ENCODE measurements at regions of chr2 and their contacts with region 1.

Region 1: GRCh38 chr2:36137612-36138011 is 218.0 kb upstream of the CRIM1 start:
- DNase-seq: no peak
- H3K4me3 ChIP-seq: no peak overlapping the region
- H3K27ac ChIP-seq: no peak overlapping the region
- H3K4me1 ChIP-seq: no peaks in the 10 kb centered on the region
- H3K27me3 ChIP-seq: no peaks in the 10 kb centered on the region
- CTCF ChIP-seq: no peak
- POLR2A ChIP-seq: no peak

Region 2: DNA sequence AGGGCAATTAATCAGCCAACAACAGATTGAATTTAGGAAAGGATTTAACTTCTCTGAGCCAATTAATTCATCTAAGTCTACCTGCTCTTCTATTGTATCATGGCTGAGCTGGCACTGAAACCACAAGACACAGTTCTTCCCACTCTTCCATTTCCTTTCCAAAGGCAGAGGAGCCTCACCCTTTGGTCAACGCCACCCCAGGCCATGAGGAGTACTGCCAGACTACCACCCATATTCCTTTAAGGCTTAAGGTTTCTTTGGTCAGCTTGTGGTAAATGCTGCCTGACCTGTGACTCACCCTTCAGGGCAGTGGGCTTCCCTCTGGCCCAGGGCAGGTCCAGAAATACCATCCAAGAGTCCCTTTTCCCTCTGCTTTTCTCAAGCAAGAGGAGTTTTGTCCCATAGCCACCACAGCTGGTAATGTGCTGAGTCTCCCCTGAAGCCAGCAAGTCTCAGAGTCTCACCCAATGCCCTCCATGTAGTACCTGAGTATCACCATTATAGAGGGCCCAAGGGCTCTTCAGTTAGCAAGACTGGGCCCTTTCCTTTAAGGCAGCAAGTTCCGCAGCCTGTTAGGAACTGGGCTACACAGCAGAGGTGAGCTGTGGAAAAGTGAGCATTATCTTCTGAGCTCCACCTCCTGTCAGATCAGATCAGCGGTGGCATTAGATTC is 682.5 kb before region 1 on chr2:
- intact Hi-C with region 1: loop called (anchors 10 kb)
- DNase-seq: no peak
- H3K4me3 ChIP-seq: no peak overlapping the region
- H3K27ac ChIP-seq: no peak overlapping the region
- H3K4me1 ChIP-seq: no peaks in the 10 kb centered on the region
- H3K27me3 ChIP-seq: no peaks in the 10 kb centered on the region
- CTCF ChIP-seq: no peak
- POLR2A ChIP-seq: no peak

Region 3: GRCh38 chr2:36088716-36089328 is 48.8 kb before region 1 on chr2:
- intact Hi-C with region 1: no loop called
- DNase-seq: no peak
- H3K4me3 ChIP-seq: no peak overlapping the region
- H3K27ac ChIP-seq: no peak overlapping the region
- H3K4me1 ChIP-seq: no peaks in the 10 kb centered on the region
- H3K27me3 ChIP-seq: no peaks in the 10 kb centered on the region
- CTCF ChIP-seq: no peak
- POLR2A ChIP-seq: no peak

Region 4: DNA sequence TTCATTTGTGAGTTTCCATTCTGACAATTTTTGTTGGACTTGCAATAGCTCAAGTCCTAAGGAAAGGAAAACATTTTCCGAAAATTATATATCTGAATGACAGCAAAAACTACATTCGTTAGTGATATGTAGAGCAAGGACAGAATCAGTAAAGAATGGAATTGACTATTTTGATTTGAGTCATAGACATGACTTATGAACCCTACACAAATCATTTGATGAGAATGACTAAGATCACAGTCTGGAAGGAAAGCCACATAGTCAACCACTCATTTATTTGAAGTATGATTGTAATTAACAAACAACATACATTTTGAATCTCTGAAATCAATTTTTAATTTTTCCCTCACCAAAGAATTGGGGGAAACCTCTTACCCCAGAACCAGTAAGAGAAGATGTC is 13.6 kb before region 1 on chr2:
- intact Hi-C with region 1: no loop called
- DNase-seq: no peak
- H3K4me3 ChIP-seq: no peak overlapping the region
- H3K27ac ChIP-seq: no peak overlapping the region
- H3K4me1 ChIP-seq: no peaks in the 10 kb centered on the region
- H3K27me3 ChIP-seq: no peaks in the 10 kb centered on the region
- CTCF ChIP-seq: no peak
- POLR2A ChIP-seq: no peak